Heart left ventricle (tissue), 16 donors: ENCODE measurements at regions of chrX and their contacts with region 1.

Region 1: DNA sequence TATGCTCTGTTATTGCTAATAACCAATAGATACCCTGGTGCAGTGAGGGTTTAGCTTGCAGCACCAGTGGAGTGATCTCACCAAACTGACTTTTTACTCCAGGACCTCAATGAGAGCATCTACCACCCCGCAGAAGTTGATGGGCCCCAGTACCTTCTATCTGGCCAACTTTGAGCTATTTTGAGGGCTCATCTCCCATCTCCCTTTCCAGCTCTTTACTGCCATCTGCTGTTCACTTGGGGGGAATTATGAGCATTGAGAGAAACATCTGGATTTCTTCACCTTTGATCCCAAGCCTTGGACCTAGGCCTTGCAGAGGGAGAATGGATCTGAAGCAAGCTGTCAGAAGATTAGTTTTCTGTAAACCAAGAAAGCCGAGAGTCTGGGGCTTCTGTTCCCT is 143.6 kb downstream of the TMEM164 start:
- DNase-seq: peak in 2 of 5 donors; percentile 10 to 30
- ATAC-seq: peak; percentile 48 to 68 (median 55)
- H3K4me3 ChIP-seq: no peak overlapping the region
- H3K27ac ChIP-seq: peak overlapping the region in 1 of 12 donors; percentile 13
- H3K4me1 ChIP-seq: peaks cover 0 to 34% (median 11%) of the 10 kb centered on the region in 12 donors
- H3K27me3 ChIP-seq: no peaks in the 10 kb centered on the region
- CTCF ChIP-seq: peak; percentile 42 to 69 (median 58)
- POLR2A ChIP-seq: no peak

Region 2: GRCh38 chrX:109911046-109911445 is 235.5 kb before region 1 on chrX:
- intact Hi-C with region 1: loop called (anchors 5 to 10 kb)
- DNase-seq: no peak
- ATAC-seq: no peak
- H3K4me3 ChIP-seq: no peak overlapping the region
- H3K27ac ChIP-seq: no peak overlapping the region
- H3K4me1 ChIP-seq: no peaks in the 10 kb centered on the region
- H3K27me3 ChIP-seq: peaks cover 0 to 38% (median 0%) of the 10 kb centered on the region in 9 donors
- CTCF ChIP-seq: peak in 11 of 12 donors; percentile 19 to 65 (median 48)
- POLR2A ChIP-seq: no peak

Region 3: GRCh38 chrX:110012834-110013485 is 133.6 kb before region 1 on chrX:
- intact Hi-C with region 1: loop called in 1 of 10 experiments (anchors 10 kb)
- DNase-seq: no peak
- ATAC-seq: no peak
- H3K4me3 ChIP-seq: no peak overlapping the region
- H3K27ac ChIP-seq: peak overlapping the region in 1 of 12 donors; percentile 4
- H3K4me1 ChIP-seq: peaks cover 0 to 23% (median 6%) of the 10 kb centered on the region in 12 donors
- H3K27me3 ChIP-seq: peaks cover 0 to 10% (median 0%) of the 10 kb centered on the region in 9 donors
- CTCF ChIP-seq: no peak
- POLR2A ChIP-seq: no peak

Region 4: GRCh38 chrX:110046001-110046400 is 100.5 kb before region 1 on chrX:
- intact Hi-C with region 1: loop called in 2 of 10 experiments (anchors 5 to 10 kb)
- DNase-seq: no peak
- ATAC-seq: peak; percentile 53 to 78 (median 64)
- H3K4me3 ChIP-seq: peak overlapping the region in 6 of 12 donors; percentile 14 to 42 (median 22)
- H3K27ac ChIP-seq: peak overlapping the region; percentile 24 to 88 (median 68)
- H3K4me1 ChIP-seq: peaks cover 0 to 30% (median 5%) of the 10 kb centered on the region in 12 donors
- H3K27me3 ChIP-seq: peaks cover 0 to 11% (median 0%) of the 10 kb centered on the region in 9 donors
- CTCF ChIP-seq: peak in 5 of 12 donors; percentile 9 to 30 (median 17)
- POLR2A ChIP-seq: no peak